ENCODE measurements at regions of chr7 and their contacts with region 1.

Region 1: DNA sequence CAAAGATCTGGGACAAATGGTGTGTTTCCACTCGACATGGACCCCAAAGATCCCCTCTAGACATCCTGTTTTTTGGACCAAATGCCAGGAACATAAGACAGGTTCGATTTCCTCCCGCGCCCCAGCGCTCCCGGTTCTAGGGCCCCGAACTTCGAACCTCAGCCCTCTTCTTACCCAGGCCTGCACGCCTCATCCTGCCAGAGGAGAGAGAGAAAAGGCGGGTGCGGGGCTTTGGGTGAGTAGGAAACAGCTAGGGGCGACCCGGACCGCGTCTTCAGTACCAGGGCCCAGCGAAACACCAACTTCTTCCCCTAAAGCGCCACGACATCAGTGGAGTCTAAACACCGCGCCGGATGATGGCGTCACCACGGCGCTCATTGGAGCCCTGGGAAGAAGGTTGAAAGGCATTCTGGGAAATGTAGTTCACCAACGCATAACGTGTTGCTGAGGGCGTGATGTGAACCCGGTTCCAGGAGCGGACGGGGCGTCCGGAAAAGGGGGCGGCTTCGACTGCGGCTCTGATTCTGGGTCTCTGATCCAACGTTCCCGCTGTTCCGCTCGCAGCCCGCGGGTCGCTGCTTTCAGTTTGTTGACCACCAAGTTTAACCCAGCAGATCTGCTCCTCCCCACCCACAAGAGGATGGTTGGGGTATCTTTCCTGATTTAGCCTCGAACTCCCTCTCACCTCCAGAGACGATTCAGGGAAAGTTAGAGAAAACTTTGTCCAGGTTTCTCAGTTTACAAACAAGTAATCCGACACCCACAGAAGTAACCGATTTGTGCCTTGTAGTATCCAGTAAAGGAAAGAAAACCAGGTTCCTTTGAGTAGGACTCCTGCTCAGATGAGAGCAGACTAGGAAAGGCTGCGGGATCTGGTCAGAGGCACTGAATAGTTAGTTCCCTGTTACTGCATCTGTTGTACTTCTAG is at the start of gene BET1:
- DNase-seq: peak; percentile 93 to 97 (median 96)
- ATAC-seq: peak; percentile 100
- H3K4me3 ChIP-seq: peak within 1 kb of the TSS; percentile 50
- H3K4me1 ChIP-seq: peaks cover 6% of the 10 kb centered on the region
- CTCF ChIP-seq: no peak
- total RNA-seq, gene BET1: 16.4 to 21.4 (median 18.9) TPM

Region 2: GRCh38 chr7:93890464-93891068 is 113.7 kb before region 1 on chr7 and contains the start of gene TFPI2:
- intact Hi-C with region 1: loop called in 1 of 2 experiments (anchors 10 kb)
- DNase-seq: peak in 2 of 3 donors; percentile 9 to 21
- ATAC-seq: peak; percentile 36
- H3K4me3 ChIP-seq: no peak within 1 kb of the TSS
- H3K4me1 ChIP-seq: no peaks in the 10 kb centered on the region
- CTCF ChIP-seq: no peak
- total RNA-seq, gene TFPI2: 0.41 to 0.61 (median 0.46) TPM

Region 3: GRCh38 chr7:93944673-93945072 is 59.6 kb before region 1 on chr7:
- intact Hi-C with region 1: no loop called
- DNase-seq: no peak
- ATAC-seq: no peak
- H3K4me3 ChIP-seq: no peak overlapping the region
- H3K4me1 ChIP-seq: no peaks in the 10 kb centered on the region
- CTCF ChIP-seq: no peak